ENCODE measurements at regions of chr13 and their contacts with region 1.

Region 1: GRCh38 chr13:106484537-106485193 is 50.8 kb downstream of the EFNB2 start:
- DNase-seq: peak; percentile 85
- H3K4me3 ChIP-seq: peak overlapping the region in 3 of 4 donors; percentile 22 to 32 (median 32)
- H3K27ac ChIP-seq: peak overlapping the region; percentile 80 to 96 (median 85)
- H3K4me1 ChIP-seq: peaks cover 0 to 50% (median 39%) of the 10 kb centered on the region in 4 donors
- H3K27me3 ChIP-seq: no peaks in the 10 kb centered on the region
- CTCF ChIP-seq: no peak
- EP300 ChIP-seq: peak; percentile 5 to 67 (median 50)
- POLR2A ChIP-seq: no peak

Region 2: GRCh38 chr13:106349080-106349931 is 135.4 kb before region 1 on chr13:
- intact Hi-C with region 1: loop called (anchors 5 kb)
- DNase-seq: no peak
- H3K4me3 ChIP-seq: peak overlapping the region in 3 of 4 donors; percentile 25 to 46 (median 41)
- H3K27ac ChIP-seq: peak overlapping the region in 2 of 4 donors; percentile 31 to 40
- H3K4me1 ChIP-seq: peaks cover 0 to 25% (median 12%) of the 10 kb centered on the region in 4 donors
- H3K27me3 ChIP-seq: no peaks in the 10 kb centered on the region
- CTCF ChIP-seq: no peak
- EP300 ChIP-seq: no peak
- POLR2A ChIP-seq: no peak

Region 3: DNA sequence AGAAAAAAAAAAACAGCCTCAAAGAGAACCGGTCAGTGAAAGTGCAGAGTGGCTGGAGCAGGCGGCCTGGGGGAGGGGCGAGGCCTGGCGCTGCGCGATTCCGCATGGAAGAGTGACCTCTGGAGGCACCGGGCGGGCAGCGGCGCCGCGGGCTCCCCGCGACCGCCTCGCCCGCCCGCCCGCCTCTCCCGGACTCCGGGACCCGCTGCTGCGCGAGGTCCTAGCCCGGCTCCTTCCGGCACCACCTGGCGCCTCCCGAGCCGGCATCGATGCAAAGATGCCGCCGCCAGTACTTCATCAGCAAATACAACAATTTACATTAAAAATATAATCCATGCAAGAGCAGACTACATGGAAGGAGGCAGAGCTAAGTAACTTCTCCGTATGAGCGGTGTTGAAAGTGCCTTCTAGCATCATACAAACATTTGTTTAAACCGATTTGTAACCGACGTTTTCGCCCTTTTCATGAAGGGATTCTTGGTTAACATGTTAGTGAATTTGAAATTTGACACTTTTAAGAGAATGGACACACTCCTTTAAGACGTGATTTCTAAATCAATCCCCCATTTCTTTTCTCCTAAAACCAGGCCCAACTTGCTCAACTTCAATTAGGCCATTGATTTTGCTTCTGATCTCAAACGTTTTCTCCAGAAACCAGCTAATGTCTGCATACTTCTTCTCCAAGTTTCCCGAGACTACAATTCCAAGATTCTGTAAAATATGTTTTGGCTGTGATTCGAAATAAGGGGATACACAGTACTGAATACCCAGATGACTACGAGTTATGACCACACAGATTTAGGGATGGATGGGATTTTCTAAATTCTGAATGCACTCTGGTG is 48.7 kb after region 1 on chr13:
- intact Hi-C with region 1: no loop called
- DNase-seq: peak; percentile 92
- H3K4me3 ChIP-seq: peak overlapping the region; percentile 51 to 89 (median 82)
- H3K27ac ChIP-seq: peak overlapping the region; percentile 85 to 93 (median 89)
- H3K4me1 ChIP-seq: peaks cover 0 to 49% (median 34%) of the 10 kb centered on the region in 4 donors
- H3K27me3 ChIP-seq: no peaks in the 10 kb centered on the region
- CTCF ChIP-seq: peak in 1 of 4 experiments; percentile 68
- EP300 ChIP-seq: no peak
- POLR2A ChIP-seq: no peak

Region 4: DNA sequence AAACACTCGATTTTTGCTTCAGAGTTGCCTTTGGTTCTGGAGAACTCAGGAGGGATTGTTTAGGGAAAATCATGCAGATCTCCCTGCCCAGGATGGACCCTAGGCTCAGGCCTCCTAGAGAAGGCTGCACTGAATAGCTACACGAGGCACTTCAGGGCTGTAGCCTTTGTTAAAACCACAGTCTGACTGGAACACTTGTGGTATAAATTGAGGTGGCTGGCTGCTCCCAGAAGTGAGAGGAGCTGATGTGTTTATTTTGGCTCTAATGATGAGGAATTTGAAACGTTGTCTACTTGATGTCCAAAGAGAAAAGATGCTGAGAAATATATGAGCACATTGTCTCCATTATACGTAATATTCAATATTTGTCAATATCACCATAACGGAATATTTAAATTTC is 845.3 kb after region 1 on chr13:
- intact Hi-C with region 1: no loop called
- DNase-seq: no peak
- H3K4me3 ChIP-seq: no peak overlapping the region
- H3K27ac ChIP-seq: no peak overlapping the region
- H3K4me1 ChIP-seq: no peaks in the 10 kb centered on the region
- H3K27me3 ChIP-seq: no peaks in the 10 kb centered on the region
- CTCF ChIP-seq: no peak
- EP300 ChIP-seq: no peak
- POLR2A ChIP-seq: no peak